ENCODE measurements at regions of chr3 and their contacts with region 1.

Region 1: DNA sequence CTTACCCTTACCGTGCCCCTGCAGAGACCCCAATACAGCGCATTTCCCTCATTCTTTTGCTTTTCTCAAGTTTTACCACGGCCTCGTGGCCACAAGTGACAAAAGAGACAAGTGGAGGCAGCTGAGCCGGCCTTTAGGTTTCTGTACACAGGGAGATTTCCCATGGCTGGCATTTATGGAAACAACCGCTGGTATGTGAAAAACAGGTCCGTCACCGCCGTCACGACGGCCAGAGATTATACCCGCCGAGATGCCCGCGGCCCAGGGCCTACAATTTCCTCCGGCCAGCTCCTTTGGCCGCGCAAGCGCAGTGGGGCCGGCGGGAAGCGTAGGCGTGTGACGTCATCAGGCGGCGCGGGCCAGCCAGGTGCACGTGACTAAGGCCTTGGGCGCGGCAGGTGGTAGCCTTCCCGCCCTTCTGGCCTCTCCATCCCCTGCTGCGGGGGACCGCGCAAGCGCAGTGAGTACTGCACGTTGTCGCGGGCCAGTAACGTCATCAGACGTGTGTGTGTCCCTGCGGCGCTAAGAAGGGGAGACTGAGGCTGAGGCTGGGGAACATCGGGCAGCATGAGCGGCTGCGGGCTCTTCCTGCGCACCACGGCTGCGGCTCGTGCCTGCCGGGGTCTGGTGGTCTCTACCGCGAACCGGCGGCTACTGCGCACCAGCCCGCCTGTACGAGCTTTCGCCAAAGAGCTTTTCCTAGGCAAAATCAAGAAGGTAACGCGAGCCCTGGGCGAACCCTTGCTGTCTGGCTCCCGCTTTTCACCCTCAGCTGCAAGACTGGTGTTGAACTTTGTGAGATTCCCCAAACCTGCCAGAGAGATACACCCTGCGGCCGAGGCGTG is at the start of gene ACAD9:
- DNase-seq: peak; percentile 96
- H3K4me3 Mint-ChIP-seq: peak within 1 kb of the TSS; percentile 84
- H3K27ac Mint-ChIP-seq: peak within 1 kb of the TSS; percentile 90
- H3K4me1 Mint-ChIP-seq: peaks cover 67% of the 10 kb centered on the region
- H3K27me3 Mint-ChIP-seq: no peaks in the 10 kb centered on the region
- total RNA-seq, gene ACAD9: 37.0 to 40.6 TPM

Region 2: DNA sequence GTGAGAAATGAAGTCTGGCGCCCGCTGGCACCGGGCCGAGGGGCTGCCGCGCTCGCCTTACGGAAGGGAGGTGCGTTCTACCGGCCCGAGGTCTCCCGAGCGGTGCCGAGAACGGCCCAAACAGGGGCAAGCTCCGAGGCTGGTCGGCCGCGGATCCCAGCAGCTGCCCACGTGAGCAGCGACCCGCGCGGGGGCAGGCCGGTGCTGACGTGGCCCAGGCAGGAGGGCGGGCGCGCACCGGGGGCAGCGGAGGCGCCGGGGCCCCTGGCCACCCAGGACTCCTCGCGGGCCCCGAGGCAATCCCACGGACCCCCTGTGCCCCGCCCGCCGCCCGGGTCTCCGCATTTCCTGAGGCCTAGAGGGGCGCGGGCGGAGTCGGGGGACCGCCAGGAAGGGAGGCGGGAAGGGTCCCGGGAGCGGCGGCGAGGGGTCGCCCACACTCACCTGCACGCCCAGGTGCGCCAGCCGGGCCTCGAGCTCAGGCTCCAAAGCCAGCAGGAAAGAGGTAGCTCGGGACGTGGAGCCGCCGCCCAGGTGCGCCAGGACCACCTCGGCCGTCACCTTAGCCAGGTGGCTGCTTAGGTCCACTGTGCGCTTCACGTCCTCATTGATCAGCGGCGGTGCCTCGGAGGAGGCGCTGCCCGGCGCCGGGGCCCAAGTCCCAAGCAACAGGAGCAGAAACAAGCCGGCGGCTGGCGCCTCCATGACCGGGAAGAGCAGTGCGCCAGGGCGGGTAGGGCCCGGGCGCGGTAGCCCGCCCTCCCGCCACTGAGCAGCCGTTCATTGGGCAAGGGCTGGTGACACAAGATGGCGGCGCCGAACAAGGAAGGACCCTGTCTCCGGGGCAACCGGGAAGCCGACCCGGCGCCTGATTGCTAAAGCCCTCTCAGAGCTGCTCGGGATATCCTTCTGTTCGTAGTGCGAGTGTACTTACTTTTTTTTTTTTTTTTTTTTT is 229.0 kb before region 1 on chr3 and contains the start of gene RPN1:
- CTCF ChIA-PET with region 1: no interaction called
- intact Hi-C with region 1: loop called (anchors 1 kb)
- DNase-seq: peak; percentile 97
- H3K4me3 Mint-ChIP-seq: peak within 1 kb of the TSS; percentile 83
- H3K27ac Mint-ChIP-seq: peak within 1 kb of the TSS; percentile 88
- H3K4me1 Mint-ChIP-seq: peaks cover 30% of the 10 kb centered on the region
- H3K27me3 Mint-ChIP-seq: no peaks in the 10 kb centered on the region
- total RNA-seq, gene RPN1: 124 to 129 TPM

Region 3: DNA sequence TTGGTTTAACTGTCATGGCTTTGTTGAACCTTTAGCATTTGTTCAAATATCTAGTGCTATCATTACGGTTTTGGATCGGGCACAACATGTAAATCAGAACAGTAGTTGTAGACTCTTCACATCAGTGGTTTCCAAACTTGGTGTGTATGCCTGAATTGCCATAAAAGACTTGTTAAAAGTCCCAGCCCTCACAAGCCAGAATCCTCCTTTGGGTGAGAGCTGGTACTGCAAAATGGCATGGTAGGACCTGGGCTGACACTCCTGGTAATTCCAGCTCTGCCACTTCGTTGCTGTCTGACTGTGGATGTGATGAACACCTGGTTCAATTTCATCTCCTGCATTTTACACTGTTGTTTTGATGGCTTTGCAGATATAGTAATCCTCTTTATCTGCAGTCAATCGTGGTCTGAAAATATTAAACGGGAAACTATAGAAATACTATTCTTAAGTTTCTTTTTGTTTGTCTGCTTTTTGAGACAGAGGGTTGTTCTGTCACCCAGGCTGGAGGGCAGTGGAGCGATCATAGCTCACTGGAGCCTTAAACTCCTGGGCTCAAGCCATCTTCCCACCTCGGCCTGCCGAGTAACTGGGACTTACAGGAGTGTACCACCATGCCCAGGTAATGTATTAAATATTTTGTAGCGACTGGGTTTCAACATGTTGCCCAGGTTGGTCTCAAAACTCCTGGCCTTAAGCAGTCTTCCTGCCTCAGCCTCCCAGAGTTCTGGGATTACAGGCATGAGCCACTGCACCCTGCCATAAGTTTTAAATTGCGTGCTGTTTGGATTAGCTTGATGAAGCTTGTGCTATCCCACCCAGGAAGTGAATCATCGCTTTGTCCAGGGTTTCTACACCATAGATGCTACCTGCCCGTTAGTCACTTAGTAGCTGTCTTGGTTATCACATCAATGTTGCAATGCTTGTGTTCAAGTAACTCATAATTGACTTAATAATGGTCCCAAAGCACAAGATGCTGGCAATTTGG is 91.8 kb before region 1 on chr3:
- CTCF ChIA-PET with region 1: interaction called, 4 read pairs
- intact Hi-C with region 1: loop called (anchors 1 kb)
- DNase-seq: peak; percentile 69
- H3K4me3 Mint-ChIP-seq: peak overlapping the region; percentile 76
- H3K27ac Mint-ChIP-seq: peak overlapping the region; percentile 99
- H3K4me1 Mint-ChIP-seq: peaks cover 98% of the 10 kb centered on the region
- H3K27me3 Mint-ChIP-seq: no peaks in the 10 kb centered on the region

Region 4: DNA sequence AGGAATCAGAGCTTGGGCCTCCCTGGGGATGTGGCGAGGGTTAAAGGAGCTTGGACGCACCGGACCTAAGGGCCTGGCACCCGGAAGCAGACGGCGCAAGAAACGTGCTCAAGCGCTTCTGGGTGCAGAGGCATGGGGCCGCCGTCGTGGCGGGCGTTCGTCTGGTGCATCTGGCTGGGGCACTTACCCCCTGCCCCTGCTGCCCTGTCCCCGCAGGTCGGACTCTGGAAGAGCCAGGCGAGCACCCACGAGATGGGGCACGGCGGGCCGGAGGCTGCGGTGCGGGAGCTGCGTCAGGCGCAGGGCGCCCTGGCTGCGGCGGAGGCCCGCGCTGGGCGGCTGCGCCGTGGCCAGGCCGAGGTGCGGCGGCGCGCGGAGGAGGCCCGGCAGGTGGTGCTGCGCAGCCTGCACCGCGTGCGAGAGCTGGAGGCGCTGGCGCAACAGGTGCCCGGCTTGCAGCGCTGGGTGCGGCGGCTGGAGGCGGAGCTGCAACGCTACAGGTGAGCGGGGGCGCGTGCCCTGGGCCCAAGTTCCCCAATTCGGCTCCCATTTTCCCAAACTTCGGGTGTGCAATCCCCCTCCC is 124.3 kb after region 1 on chr3:
- CTCF ChIA-PET with region 1: no interaction called
- intact Hi-C with region 1: loop called (anchors 5 kb)
- DNase-seq: peak; percentile 69
- H3K4me3 Mint-ChIP-seq: peak overlapping the region; percentile 53
- H3K27ac Mint-ChIP-seq: no peak overlapping the region
- H3K4me1 Mint-ChIP-seq: peaks cover 36% of the 10 kb centered on the region
- H3K27me3 Mint-ChIP-seq: peaks cover 21% of the 10 kb centered on the region

Region 5: GRCh38 chr3:129183569-129184395 is 304.4 kb after region 1 on chr3 and contains the start of gene CNBP:
- CTCF ChIA-PET with region 1: no interaction called
- intact Hi-C with region 1: loop called (anchors 1 kb)
- DNase-seq: peak; percentile 93
- H3K4me3 Mint-ChIP-seq: peak within 1 kb of the TSS; percentile 96
- H3K27ac Mint-ChIP-seq: peak within 1 kb of the TSS; percentile 95
- H3K4me1 Mint-ChIP-seq: peaks cover 35% of the 10 kb centered on the region
- H3K27me3 Mint-ChIP-seq: no peaks in the 10 kb centered on the region
- total RNA-seq, gene CNBP: 490 to 500 TPM

Region 6: DNA sequence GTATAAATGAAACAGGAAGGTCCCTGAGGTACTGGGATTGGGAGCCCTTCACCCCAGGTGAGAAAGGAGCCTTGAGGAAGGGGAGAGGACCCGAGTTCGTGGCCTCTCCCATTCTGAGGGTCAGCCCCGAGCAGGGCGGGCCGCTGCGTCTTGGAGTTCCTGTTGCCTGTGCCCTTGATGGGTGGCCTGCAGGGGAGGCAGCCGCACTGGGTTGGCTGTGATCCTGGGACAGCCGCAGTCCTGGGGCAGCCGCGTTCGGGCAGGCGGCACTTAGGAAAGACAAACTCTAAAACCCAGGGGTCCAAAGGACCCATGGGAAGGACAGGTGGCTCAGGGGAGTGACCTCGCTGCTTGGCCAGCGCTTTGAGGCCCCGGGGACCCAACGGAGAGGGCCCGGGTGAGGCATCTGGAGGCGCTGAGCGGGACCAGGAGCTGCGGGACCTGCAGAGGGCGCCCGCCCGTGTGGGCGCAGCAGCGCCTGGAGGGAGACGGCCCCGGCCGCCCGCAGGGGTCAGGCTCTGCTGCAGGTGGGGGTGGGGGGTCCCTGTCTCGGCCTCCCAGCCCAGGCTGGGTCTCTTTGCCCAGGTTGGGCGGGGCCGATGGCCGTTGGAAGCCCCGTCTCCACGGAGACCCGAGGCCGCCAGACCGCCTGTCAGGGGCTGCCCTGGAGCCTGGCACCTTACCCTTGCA is 464.4 kb after region 1 on chr3:
- CTCF ChIA-PET with region 1: no interaction called
- intact Hi-C with region 1: no loop called
- DNase-seq: peak; percentile 44
- H3K4me3 Mint-ChIP-seq: peak overlapping the region; percentile 34
- H3K27ac Mint-ChIP-seq: no peak overlapping the region
- H3K4me1 Mint-ChIP-seq: peaks cover 8% of the 10 kb centered on the region
- H3K27me3 Mint-ChIP-seq: peaks cover 24% of the 10 kb centered on the region

Measured in activated naive CD4-positive, alpha-beta T cell treated with anti-CD3 and anti-CD28 coated beads for 36 hours (primary cell).